Right cardiac atrium (tissue), 5 donors: ENCODE measurements at regions of chr9 and their contacts with region 1.

Region 1: DNA sequence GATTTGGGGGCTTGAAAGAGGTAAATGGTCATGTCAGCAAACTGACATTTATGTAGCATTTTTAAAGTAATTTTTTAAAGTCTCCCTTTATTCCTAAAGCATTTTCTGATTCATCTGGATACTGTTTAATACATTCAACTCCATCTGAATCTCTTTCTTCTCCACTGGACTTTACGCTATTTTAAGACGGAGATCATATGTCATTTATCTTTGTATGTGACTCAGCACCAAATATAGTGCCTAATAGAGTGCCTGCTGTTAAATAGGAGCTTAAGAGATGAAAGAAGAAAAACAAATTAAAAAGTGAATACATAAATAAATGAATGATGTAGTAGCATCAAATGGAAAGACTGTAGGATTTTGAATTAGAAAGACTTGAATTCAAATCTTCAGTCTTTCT is 548.8 kb upstream of the SMC2 start:
- DNase-seq: no peak
- ATAC-seq: no peak
- H3K4me3 ChIP-seq: no peak overlapping the region
- H3K27ac ChIP-seq: no peak overlapping the region
- H3K4me1 ChIP-seq: no peaks in the 10 kb centered on the region
- H3K27me3 ChIP-seq: no peaks in the 10 kb centered on the region

Region 2: DNA sequence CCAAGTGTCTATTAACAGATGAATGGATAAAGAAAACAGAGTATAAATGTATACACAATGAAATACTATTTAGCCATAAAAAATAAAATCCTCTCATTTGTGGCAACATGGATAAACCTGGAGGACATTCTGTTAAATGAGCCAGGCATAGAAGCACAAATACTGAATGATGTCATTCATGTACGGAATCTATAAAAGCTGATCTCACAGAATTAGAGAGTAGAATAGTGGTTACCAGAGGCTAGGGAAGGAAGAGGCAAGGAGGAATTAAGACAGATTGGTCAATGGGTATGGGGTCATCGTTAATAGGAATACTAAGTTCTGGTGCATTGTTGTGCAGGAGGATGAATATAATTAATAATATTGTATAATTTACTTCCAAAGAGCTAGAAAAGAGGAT is 44.5 kb after region 1 on chr9:
- intact Hi-C with region 1: loop called in 1 of 4 experiments (anchors 5 kb)
- DNase-seq: no peak
- ATAC-seq: no peak
- H3K4me3 ChIP-seq: no peak overlapping the region
- H3K27ac ChIP-seq: no peak overlapping the region
- H3K4me1 ChIP-seq: no peaks in the 10 kb centered on the region
- H3K27me3 ChIP-seq: no peaks in the 10 kb centered on the region

Region 3: DNA sequence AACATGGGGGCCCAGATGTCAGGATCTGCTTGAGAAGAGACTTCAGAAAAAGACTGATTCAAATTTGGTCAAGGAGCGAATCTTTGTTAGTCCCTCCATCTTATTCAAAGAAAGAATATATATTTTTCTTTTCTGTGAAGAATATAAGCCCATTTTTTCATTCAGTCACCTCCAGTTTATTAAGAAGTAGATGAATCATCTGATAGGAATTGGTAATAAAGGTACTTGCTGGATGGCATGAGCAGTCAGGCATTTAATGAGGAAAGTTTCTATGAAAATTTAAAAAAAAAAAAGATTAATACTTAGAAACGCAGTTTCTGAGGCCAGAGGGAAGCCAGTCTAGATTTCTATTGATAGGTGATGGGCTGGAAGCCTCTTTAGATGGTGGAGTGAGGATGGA is 175.8 kb after region 1 on chr9:
- intact Hi-C with region 1: no loop called
- DNase-seq: no peak
- ATAC-seq: no peak
- H3K4me3 ChIP-seq: no peak overlapping the region
- H3K27ac ChIP-seq: no peak overlapping the region
- H3K4me1 ChIP-seq: no peaks in the 10 kb centered on the region
- H3K27me3 ChIP-seq: no peaks in the 10 kb centered on the region